MCF 10A (cell line): ENCODE measurements at regions of chr3 and their contacts with region 1.

Region 1: GRCh38 chr3:169149349-169149890 is 514.1 kb downstream of the MECOM start:
- DNase-seq: peak; percentile 86
- H3K4me3 Mint-ChIP-seq: peak overlapping the region; percentile 81
- H3K27ac Mint-ChIP-seq: no peak overlapping the region
- H3K4me1 Mint-ChIP-seq: peaks cover 9% of the 10 kb centered on the region
- H3K27me3 Mint-ChIP-seq: no peaks in the 10 kb centered on the region
- CTCF ChIP-seq: peak; percentile 73

Region 2: GRCh38 chr3:168865022-168865551 is 284.3 kb before region 1 on chr3:
- CTCF ChIA-PET with region 1: interaction called, 6 read pairs
- POLR2A ChIA-PET with region 1: interaction called, 3 read pairs
- intact Hi-C with region 1: loop called (anchors 10 kb)
- DNase-seq: peak; percentile 41
- H3K4me3 Mint-ChIP-seq: no peak overlapping the region
- H3K27ac Mint-ChIP-seq: no peak overlapping the region
- H3K4me1 Mint-ChIP-seq: no peaks in the 10 kb centered on the region
- H3K27me3 Mint-ChIP-seq: peaks cover 59% of the 10 kb centered on the region
- CTCF ChIP-seq: peak; percentile 65

Region 3: DNA sequence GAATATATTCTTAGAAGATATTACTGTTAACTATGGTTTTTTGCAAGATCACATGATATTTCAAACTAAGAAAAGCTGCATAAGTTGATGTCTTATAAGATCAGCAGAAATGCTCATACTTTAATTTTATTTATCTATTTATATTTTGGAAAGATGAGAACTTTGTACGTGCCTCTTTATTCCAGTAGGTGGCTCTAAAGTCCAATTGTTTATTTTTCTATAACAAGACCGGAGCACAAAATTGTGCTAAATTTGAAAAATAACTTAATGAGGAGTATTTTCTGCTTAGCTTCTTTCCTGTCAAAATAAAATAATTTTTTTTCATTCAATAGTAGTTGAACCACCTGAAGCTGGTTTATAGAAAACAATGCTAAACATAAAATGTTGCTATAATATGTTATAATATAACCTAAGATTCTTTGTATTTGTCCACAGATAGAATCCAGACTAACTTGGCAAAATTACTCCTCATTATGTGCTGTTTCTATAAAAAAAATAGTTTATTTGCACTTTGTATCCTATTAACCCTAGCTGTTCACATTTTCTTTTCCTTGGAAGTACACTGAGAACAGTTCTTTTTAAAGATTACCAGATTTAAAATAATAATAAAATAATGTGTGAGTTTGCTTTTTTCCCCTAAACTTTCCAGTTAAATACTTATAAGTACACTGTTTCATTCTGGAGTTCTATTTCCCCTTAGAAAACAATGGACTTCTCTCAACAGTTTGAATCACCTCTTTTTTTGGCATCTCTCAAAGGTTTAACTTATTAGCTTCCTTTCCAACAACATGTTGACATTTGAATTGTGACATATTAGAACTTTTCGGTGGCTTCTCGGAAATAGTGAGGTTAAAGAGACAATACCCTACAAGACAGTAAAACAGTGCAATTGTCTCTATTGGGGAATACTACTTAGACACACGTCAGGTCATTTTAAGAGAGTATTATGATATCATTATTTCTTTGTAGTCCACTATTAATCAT is 15.9 kb before region 1 on chr3:
- CTCF ChIA-PET with region 1: interaction called, 27 read pairs
- POLR2A ChIA-PET with region 1: interaction called, 5 read pairs
- intact Hi-C with region 1: no loop called
- DNase-seq: peak; percentile 33
- H3K4me3 Mint-ChIP-seq: no peak overlapping the region
- H3K27ac Mint-ChIP-seq: peak overlapping the region; percentile 6
- H3K4me1 Mint-ChIP-seq: peaks cover 5% of the 10 kb centered on the region
- H3K27me3 Mint-ChIP-seq: no peaks in the 10 kb centered on the region
- CTCF ChIP-seq: peak; percentile 49

Region 4: GRCh38 chr3:169218314-169218983 is 69.0 kb after region 1 on chr3:
- CTCF ChIA-PET with region 1: interaction called, 11 read pairs
- POLR2A ChIA-PET with region 1: no interaction called
- intact Hi-C with region 1: no loop called
- DNase-seq: peak; percentile 58
- H3K4me3 Mint-ChIP-seq: no peak overlapping the region
- H3K27ac Mint-ChIP-seq: peak overlapping the region; percentile 53
- H3K4me1 Mint-ChIP-seq: peaks cover 9% of the 10 kb centered on the region
- H3K27me3 Mint-ChIP-seq: no peaks in the 10 kb centered on the region
- CTCF ChIP-seq: peak; percentile 31

Region 5: DNA sequence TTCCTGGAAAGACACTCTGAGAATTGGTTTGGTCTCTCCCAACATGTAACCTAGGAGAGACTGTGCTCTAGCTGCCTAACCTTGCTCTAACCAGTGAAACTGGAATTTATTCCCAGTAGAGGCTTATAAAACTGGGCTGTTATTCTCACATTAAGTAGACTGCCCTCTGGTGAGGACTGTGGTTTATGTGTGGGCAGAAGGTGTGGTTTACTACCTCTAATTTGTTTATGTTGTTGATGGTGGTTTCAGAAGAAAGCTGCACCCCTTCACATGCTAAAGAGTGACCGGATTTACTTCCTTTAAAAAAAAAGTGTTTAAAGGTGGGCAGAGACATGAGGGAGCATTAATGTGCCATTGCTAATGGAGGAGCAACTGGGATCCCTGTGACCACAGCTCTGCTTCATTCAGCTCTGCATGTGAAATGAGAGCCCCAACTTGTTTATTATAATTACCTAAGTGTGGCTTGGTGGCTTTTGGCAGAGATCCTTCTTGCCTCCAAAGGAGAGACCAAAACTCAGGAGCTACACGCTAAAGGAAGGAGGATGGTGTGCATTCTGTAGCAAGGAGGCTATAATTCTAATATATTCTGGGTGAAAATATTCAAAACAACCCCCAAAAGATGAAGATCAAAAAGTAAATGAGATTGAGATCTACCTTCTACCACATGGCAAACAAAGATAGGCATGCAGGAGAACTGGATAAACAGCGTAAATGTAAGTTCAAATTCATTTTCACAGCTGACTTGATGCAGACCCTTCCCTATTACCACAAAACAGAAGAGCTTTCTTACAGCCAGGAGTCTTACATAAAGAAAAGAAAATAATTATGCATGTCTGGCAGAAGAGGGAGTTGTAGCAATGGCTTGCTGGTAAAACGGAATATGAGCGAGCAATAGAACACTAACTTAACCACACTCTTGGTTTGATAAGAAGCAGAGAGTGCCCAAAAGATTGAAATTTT is 241.1 kb after region 1 on chr3:
- CTCF ChIA-PET with region 1: interaction called, 41 read pairs
- POLR2A ChIA-PET with region 1: interaction called, 3 read pairs
- intact Hi-C with region 1: loop called (anchors 5 kb)
- DNase-seq: peak; percentile 21
- H3K4me3 Mint-ChIP-seq: no peak overlapping the region
- H3K27ac Mint-ChIP-seq: no peak overlapping the region
- H3K4me1 Mint-ChIP-seq: no peaks in the 10 kb centered on the region
- H3K27me3 Mint-ChIP-seq: no peaks in the 10 kb centered on the region
- CTCF ChIP-seq: peak; percentile 9

Region 6: DNA sequence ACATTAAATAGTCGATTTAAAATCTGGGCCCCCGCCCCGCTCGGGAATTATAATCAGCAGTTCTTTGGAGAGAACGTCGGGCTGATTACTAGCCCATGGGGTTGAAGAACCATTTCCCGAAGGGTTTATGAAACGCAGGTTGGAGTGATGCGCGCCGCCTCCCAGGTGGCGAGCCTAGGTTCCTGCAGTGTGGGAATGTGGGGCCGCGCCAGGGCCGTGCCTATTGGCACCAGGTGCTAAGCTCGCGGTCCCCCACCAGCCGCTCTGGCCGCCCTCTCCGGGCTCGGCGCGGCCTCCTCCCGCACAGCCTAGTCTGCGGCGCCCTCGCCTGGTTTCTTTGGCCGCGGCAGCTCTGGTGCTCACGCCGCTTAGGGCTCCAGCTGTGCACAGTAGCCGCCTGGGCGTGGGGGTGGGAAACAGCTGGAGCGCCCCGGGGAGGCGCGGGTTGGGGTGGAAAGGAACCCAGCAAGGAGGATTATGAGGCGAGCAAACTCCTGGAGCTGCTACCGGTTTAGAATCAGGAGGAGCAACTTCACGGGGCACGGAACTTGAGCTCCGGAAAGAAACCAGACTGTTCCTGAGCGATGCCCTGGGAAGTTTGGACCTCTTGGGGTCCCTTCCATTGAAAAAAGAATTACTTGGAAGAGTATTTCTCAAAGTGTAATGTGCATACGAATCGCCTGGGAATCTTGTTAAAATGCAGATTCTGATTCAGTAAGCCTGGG is 519.7 kb after region 1 on chr3:
- CTCF ChIA-PET with region 1: interaction called, 163 read pairs
- POLR2A ChIA-PET with region 1: interaction called, 22 read pairs
- intact Hi-C with region 1: loop called (anchors 1 kb)
- DNase-seq: peak; percentile 72
- H3K4me3 Mint-ChIP-seq: peak overlapping the region; percentile 75
- H3K27ac Mint-ChIP-seq: no peak overlapping the region
- H3K4me1 Mint-ChIP-seq: no peaks in the 10 kb centered on the region
- H3K27me3 Mint-ChIP-seq: peaks cover 29% of the 10 kb centered on the region
- CTCF ChIP-seq: peak; percentile 87